Posterior cingulate gyrus (tissue), 11 donors: ENCODE measurements at regions of chr11 and their contacts with region 1.

Region 1: GRCh38 chr11:62732801-62733200 is 4.5 kb downstream of the TTC9C start:
- DNase-seq: no peak

Region 2: GRCh38 chr11:62560566-62561103 is 172.2 kb before region 1 on chr11:
- intact Hi-C with region 1: no loop called
- DNase-seq: peak in 6 of 10 donors; percentile 52 to 90 (median 60)

Region 3: DNA sequence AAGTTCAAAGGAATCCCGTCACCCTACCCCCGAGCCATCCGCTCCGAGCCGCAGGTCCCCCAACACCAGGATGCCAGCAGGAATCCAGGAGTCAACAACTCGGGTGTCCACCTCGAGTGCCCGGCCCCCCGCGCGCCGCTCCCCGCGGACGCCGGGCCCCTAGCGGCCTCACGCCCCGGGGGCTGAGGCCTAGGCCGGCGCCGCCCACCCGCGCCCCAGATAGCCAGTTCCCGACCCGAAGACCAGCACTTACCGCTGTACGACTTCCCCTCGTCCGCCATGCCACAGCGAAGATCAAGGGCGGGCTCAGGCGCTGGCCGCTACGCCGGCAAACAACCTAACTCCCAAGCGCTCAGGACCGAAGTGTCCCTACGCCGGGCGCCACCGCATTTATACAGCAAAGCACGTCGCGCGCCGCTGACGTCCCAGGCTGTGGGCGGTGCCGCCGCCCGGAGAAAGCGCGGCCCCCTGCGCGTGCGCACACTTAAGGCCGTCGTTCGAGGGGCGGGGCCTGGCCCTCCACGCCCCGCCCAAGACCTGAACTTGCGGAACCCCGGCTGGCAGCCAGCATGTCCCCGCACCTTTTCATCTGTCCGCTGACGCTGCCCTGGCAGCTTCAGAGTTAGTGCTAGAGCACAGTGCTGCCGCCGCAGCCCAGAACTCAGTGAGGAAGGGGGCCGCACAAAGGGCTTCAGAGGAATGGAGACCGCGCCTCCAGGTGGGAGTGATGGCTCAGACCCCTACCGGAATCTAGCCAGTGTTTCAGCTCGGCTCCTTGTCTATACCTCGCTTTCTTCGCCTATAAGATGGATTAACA is 72.5 kb after region 1 on chr11 and contains the start of gene NXF1:
- intact Hi-C with region 1: no loop called
- DNase-seq: peak; percentile 92 to 99 (median 94)

Region 4: GRCh38 chr11:62860835-62861563 is 128.2 kb after region 1 on chr11:
- intact Hi-C with region 1: loop called (anchors 5 kb)
- DNase-seq: peak in 1 of 10 donors; percentile 46